Body of pancreas (tissue), 4 donors: ENCODE measurements at regions of chr4 and their contacts with region 1.

Region 1: DNA sequence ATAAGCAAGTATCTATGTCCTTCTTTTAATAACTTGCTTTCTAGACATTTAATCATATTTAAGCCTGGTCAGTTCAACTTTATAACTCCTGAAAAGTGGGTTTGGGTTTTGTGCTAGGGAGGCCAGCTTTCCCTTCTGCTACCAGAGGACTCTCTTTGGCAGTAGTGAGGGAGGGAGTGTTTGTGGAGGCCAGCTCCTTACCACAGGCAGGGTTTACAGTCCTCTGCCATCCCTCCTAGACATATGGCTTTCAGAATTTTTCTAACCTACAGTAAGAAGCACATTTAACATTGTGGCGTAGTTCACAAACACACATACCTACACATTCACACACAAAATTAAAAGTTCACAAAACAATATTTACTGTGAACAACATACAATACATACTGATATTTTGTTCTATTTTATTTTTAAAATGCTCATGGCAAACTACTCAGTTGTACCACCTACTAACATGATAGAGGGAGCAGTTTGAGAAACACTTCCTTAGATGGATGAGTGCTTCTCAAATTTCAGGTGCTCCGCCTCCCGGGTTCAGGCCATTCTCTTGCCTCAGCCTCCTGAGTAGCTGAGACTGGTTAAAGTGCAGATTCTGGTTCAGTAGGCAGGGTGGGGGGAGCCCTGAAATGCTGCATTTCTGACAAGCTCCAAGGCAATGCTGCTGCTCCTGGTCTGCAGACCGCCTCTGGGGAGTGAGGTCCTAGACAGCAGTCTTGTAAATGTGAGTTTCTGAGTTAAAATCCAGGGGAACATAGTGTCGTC is 86.7 kb downstream of the PTTG2 start:
- DNase-seq: no peak
- ATAC-seq: no peak
- H3K4me3 ChIP-seq: no peak overlapping the region
- H3K27ac ChIP-seq: no peak overlapping the region
- H3K4me1 ChIP-seq: peaks cover 29% of the 10 kb centered on the region
- H3K27me3 ChIP-seq: no peaks in the 10 kb centered on the region
- CTCF ChIP-seq: no peak
- POLR2A ChIP-seq: no peak

Region 2: GRCh38 chr4:37812710-37813109 is 234.2 kb before region 1 on chr4:
- intact Hi-C with region 1: loop called (anchors 10 kb)
- DNase-seq: no peak
- ATAC-seq: no peak
- H3K4me3 ChIP-seq: no peak overlapping the region
- H3K27ac ChIP-seq: no peak overlapping the region
- H3K4me1 ChIP-seq: no peaks in the 10 kb centered on the region
- H3K27me3 ChIP-seq: no peaks in the 10 kb centered on the region
- CTCF ChIP-seq: no peak
- POLR2A ChIP-seq: no peak

Region 3: DNA sequence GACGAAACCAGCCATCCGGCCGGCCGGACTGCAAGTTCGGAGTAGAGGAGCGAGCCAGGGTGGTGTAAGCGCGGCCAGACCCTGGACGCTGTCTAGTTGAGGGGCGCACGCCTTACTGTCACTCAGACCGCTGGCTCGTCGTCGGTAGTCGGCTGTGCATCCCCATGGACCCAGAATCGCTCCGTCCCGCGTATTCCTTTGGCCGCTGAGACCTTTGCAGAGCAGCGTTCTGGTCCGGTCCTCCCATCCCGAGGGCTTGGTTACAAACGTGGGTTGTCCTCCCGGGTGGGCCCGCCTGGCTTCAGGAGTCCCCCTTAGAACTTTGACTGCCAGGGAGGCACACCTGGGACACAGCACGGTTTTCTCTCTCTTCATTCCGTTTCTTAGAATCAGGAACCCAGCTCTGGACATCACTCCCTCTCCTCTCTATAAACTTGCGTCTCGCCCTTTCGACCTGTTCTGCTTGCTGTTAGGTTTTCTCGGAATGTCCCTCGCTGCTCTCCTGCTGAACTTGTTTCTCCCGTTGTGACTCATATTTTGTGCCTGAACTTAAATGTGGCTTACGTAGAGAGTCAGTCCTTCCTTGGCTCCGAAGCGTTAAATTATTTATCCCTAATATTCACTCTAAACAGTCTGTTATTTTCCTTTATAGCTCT is 219.8 kb before region 1 on chr4:
- intact Hi-C with region 1: no loop called
- DNase-seq: no peak
- ATAC-seq: peak; percentile 15
- H3K4me3 ChIP-seq: peak overlapping the region; percentile 25 to 95
- H3K27ac ChIP-seq: peak overlapping the region; percentile 59 to 86 (median 74)
- H3K4me1 ChIP-seq: peaks cover 22% of the 10 kb centered on the region
- H3K27me3 ChIP-seq: no peaks in the 10 kb centered on the region
- CTCF ChIP-seq: no peak
- POLR2A ChIP-seq: no peak